HepG2 (cell line): ENCODE measurements at regions of chr5 and their contacts with region 1.

Region 1: DNA sequence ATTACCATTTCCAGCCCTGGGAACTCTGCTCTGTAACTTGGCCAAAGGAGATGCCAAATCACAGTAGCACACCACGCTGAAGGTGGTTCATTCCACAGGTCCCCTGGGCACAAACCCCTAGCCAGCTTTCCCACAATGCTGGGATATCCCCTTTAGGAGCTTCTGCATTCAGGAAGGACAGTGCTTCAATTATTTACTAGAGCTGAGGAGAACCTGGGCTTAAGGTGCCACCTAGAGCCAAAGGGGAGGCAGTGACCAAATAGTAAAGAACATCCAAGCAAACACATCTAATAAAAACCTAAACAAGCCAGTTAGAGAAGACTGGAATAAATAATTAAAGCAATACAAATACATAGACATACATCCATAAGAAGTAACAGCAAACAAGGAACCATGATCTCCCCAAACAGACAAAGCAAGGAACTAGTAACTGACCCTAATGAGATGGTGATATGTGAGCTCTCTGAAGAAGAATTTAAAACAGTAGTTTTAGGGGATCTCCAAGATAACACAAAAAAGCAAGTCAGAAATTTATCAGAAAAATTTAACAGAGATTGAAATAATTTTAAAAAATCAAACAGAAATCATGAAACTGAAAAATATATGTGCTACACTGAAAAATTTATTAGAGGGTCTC is 14.6 kb downstream of the KIF4B start:
- DNase-seq: peak; percentile 52
- ATAC-seq: peak; percentile 99
- H3K4me3 ChIP-seq: no peak overlapping the region
- H3K27ac ChIP-seq: no peak overlapping the region
- H3K4me1 ChIP-seq: 0 out of 2 replicates have a peak, but pooled peaks cover 5% of the 10 kb centered on the region
- H3K27me3 ChIP-seq: peaks cover 0 to 3% of the 10 kb centered on the region in 2 experiments; a peak in 2 of 5 replicates
- CTCF ChIP-seq: peak; percentile 80
- EP300 ChIP-seq: no peak
- POLR2A ChIP-seq: no peak
- RAD21 ChIP-seq: peak; percentile 66

Region 2: GRCh38 chr5:154940772-154941620 is 87.1 kb before region 1 on chr5 and contains the start of gene MRPL22:
- CTCF ChIA-PET with region 1: interaction called, 7 read pairs
- POLR2A ChIA-PET with region 1: no interaction called
- in situ Hi-C with region 1: no loop called
- intact Hi-C with region 1: loop called (anchors 1 kb)
- DNase-seq: peak; percentile 87
- ATAC-seq: peak; percentile 68
- H3K4me3 ChIP-seq: peak within 1 kb of the TSS; percentile 80 to 83 (median 82)
- H3K27ac ChIP-seq: peak within 1 kb of the TSS; percentile 78
- H3K4me1 ChIP-seq: peaks cover 51% of the 10 kb centered on the region
- H3K27me3 ChIP-seq: no peaks in the 10 kb centered on the region; a peak in 1 of 5 replicates
- CTCF ChIP-seq: no peak
- EP300 ChIP-seq: no peak
- POLR2A ChIP-seq: peak; percentile 83 to 84
- RAD21 ChIP-seq: no peak
- total RNA-seq, gene MRPL22: 84.8 and 118 TPM in 2 replicates

Region 3: GRCh38 chr5:154972476-154973080 is 55.5 kb before region 1 on chr5:
- CTCF ChIA-PET with region 1: interaction called, 16 read pairs
- POLR2A ChIA-PET with region 1: no interaction called
- in situ Hi-C with region 1: loop called (anchors 10 kb)
- intact Hi-C with region 1: loop called (anchors 1 kb)
- DNase-seq: peak; percentile 35
- ATAC-seq: peak; percentile 66
- H3K4me3 ChIP-seq: no peak overlapping the region
- H3K27ac ChIP-seq: no peak overlapping the region
- H3K4me1 ChIP-seq: peaks cover 19% of the 10 kb centered on the region
- H3K27me3 ChIP-seq: no peaks in the 10 kb centered on the region
- CTCF ChIP-seq: peak; percentile 76
- EP300 ChIP-seq: no peak
- POLR2A ChIP-seq: no peak
- RAD21 ChIP-seq: peak; percentile 54; the same call in 1 of the 2 replicates

Region 4: DNA sequence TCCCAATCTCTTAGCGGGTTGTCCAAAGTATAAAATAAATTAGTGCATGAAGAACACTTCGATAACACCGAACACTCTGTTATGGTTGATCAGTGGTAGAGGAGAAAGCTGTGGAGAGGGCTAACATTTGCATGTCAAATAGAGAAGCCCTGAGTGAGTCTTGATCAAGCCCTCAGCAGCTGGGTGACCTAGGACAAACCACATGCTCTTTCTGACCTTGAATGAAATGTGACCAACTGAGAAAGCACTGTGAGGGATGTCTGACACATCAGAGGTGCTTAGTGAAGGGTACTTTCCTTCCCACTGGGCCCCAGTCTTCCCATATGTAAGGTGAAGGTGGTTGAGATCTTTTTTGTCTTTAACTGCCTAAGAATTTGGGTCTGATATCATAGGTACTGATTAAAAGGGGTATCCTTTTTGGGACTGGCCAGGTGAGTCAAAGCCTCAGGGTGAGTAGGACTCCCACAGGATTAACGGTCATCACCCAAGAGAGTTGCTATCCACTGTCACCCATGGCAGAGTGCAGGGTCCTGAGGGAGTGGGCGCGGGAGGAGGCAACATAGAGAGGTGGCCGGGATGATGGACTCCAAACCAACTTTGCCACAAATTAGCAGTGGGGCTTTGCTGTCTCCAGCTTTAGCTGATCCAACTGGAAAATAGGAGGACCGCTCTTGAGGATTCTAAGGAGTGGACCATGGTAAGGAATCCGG is 38.9 kb after region 1 on chr5:
- CTCF ChIA-PET with region 1: no interaction called
- POLR2A ChIA-PET with region 1: no interaction called
- in situ Hi-C with region 1: no loop called
- intact Hi-C with region 1: no loop called
- DNase-seq: no peak
- ATAC-seq: no peak
- H3K4me3 ChIP-seq: no peak overlapping the region
- H3K27ac ChIP-seq: no peak overlapping the region
- H3K4me1 ChIP-seq: no peaks in the 10 kb centered on the region
- H3K27me3 ChIP-seq: no peaks in the 10 kb centered on the region; a peak in 2 of 5 replicates
- CTCF ChIP-seq: no peak
- EP300 ChIP-seq: no peak
- POLR2A ChIP-seq: no peak
- RAD21 ChIP-seq: no peak